ENCODE measurements at regions of chr20 and their contacts with region 1.

Region 1: GRCh38 chr20:53578492-53579222 is 15.0 kb downstream of the ZNF217 start:
- DNase-seq: peak; percentile 31 to 82 (median 73)
- H3K4me3 ChIP-seq: peak overlapping the region; percentile 61
- H3K4me3 Mint-ChIP-seq: peak overlapping the region; percentile 84 to 98 (median 89)
- H3K27ac ChIP-seq: peak overlapping the region; percentile 68
- H3K27ac Mint-ChIP-seq: peak overlapping the region; percentile 75 to 96 (median 92)
- H3K4me1 ChIP-seq: peaks cover 86% of the 10 kb centered on the region
- H3K4me1 Mint-ChIP-seq: peaks cover 82 to 94% (median 84%) of the 10 kb centered on the region in 3 donors
- H3K27me3 ChIP-seq: no peaks in the 10 kb centered on the region
- H3K27me3 Mint-ChIP-seq: no peaks in the 10 kb centered on the region

Region 2: GRCh38 chr20:53594068-53595017 is 15.7 kb after region 1 on chr20:
- CTCF ChIA-PET with region 1: interaction called, 8 read pairs
- POLR2A ChIA-PET with region 1: interaction called, 12 read pairs
- DNase-seq: peak; percentile 95 to 99 (median 96)
- H3K4me3 ChIP-seq: peak overlapping the region; percentile 63
- H3K4me3 Mint-ChIP-seq: peak overlapping the region; percentile 83 to 99 (median 98)
- H3K27ac ChIP-seq: peak overlapping the region; percentile 80
- H3K27ac Mint-ChIP-seq: peak overlapping the region; percentile 90 to 96 (median 93)
- H3K4me1 ChIP-seq: peaks cover 34% of the 10 kb centered on the region
- H3K4me1 Mint-ChIP-seq: peaks cover 49 to 71% (median 66%) of the 10 kb centered on the region in 3 donors
- H3K27me3 ChIP-seq: no peaks in the 10 kb centered on the region
- H3K27me3 Mint-ChIP-seq: peaks cover 0 to 4% of the 10 kb centered on the region in 2 donors

Region 3: DNA sequence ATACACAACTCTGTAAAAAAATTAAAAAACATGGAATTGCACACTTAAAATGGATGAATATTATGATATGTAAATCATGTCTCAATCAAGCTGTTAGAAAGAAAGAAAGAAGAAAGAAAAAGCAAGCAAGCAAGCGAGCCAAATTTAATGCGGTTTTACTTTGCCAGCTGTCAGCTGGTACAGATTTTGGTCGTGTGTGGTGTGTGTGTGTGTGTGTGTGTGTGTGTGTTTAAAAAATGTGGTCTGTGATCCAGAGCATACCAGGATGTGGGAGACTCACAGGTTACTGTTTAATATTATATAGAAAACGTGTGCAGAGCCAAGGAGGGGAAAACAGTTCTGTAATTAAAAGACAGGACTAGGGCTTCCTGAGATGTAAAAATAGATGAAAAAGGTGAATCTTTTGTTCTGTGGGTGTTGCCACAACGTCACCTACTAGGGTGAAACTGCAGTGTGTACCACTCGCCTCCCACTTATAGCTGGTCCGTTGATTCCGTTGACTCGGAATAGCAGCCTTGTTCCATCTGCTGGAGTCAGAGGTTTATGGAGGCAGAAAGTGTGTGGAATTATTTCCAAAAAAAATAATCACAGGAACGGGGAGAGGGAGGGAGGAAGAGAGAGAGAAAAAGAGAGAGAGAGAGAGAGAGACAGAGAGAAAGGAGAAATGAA is 294.0 kb after region 1 on chr20:
- CTCF ChIA-PET with region 1: interaction called, 20 read pairs
- POLR2A ChIA-PET with region 1: interaction called, 8 read pairs
- DNase-seq: peak; percentile 24 to 75 (median 74)
- H3K4me3 ChIP-seq: peak overlapping the region; percentile 59
- H3K4me3 Mint-ChIP-seq: peak overlapping the region; percentile 79 to 92 (median 88)
- H3K27ac ChIP-seq: peak overlapping the region; percentile 62
- H3K27ac Mint-ChIP-seq: peak overlapping the region; percentile 90 to 99 (median 97)
- H3K4me1 ChIP-seq: peaks cover 55% of the 10 kb centered on the region
- H3K4me1 Mint-ChIP-seq: peaks cover 48 to 73% (median 68%) of the 10 kb centered on the region in 3 donors
- H3K27me3 ChIP-seq: no peaks in the 10 kb centered on the region
- H3K27me3 Mint-ChIP-seq: peaks cover 0 to 4% of the 10 kb centered on the region in 2 donors

Measured in CD8-positive, alpha-beta memory T cell (primary cell).